Breast epithelium (tissue), 4 donors: ENCODE measurements at regions of chr12 and their contacts with region 1.

Region 1: GRCh38 chr12:147242-147641 is 66.7 kb downstream of the SLC6A12 start:
- DNase-seq: no peak
- H3K4me3 ChIP-seq: no peak overlapping the region
- H3K27ac ChIP-seq: no peak overlapping the region
- H3K4me1 ChIP-seq: no peaks in the 10 kb centered on the region
- H3K27me3 ChIP-seq: no peaks in the 10 kb centered on the region
- CTCF ChIP-seq: no peak
- POLR2A ChIP-seq: no peak

Region 2: DNA sequence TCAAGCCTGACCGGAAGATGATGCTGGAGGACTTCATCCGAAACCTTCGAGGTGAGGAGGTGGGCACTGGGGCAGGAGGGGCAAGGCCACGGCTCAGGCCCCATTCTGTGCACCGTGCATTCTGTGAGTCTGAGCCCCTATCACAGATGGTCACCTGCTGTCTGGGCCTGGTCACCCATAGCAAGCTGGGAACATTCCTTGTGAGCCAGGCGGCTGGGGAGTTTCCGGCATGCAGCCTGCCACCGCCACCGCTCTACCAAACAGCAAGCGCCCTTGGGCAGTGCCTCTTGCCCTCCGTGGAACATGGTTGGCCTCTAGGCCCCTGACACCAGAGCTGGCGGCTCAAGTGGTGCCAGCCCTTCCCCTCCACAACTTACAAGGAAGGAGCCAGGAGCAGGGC is 10.4 kb after region 1 on chr12:
- intact Hi-C with region 1: loop called (anchors 1 kb)
- DNase-seq: no peak
- H3K4me3 ChIP-seq: no peak overlapping the region
- H3K27ac ChIP-seq: no peak overlapping the region
- H3K4me1 ChIP-seq: no peaks in the 10 kb centered on the region
- H3K27me3 ChIP-seq: no peaks in the 10 kb centered on the region
- CTCF ChIP-seq: no peak
- POLR2A ChIP-seq: no peak

Region 3: DNA sequence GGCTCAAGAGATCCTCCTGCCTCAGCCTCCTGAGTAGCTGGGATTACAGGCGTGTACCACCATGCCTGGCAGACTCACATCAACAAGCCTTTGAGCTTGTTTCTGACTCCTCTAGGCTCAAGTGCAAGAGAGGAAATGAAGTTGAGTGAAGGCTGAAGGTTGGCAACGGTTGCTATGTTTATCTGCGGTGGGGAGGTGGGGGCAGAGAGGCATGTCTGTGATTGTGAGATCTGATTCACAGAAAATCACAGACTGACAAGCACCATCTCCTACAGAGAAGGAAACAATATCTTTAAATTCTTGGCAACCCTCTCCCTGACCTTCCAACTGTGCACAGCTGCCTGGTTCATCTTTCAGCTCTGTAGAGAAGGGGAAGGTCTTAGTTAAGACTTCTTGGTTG is 538.1 kb after region 1 on chr12:
- intact Hi-C with region 1: no loop called
- DNase-seq: no peak
- H3K4me3 ChIP-seq: no peak overlapping the region
- H3K27ac ChIP-seq: no peak overlapping the region
- H3K4me1 ChIP-seq: no peaks in the 10 kb centered on the region
- H3K27me3 ChIP-seq: no peaks in the 10 kb centered on the region
- CTCF ChIP-seq: no peak
- POLR2A ChIP-seq: no peak